Panc1 (cell line): ENCODE measurements at regions of chr5 and their contacts with region 1.

Region 1: DNA sequence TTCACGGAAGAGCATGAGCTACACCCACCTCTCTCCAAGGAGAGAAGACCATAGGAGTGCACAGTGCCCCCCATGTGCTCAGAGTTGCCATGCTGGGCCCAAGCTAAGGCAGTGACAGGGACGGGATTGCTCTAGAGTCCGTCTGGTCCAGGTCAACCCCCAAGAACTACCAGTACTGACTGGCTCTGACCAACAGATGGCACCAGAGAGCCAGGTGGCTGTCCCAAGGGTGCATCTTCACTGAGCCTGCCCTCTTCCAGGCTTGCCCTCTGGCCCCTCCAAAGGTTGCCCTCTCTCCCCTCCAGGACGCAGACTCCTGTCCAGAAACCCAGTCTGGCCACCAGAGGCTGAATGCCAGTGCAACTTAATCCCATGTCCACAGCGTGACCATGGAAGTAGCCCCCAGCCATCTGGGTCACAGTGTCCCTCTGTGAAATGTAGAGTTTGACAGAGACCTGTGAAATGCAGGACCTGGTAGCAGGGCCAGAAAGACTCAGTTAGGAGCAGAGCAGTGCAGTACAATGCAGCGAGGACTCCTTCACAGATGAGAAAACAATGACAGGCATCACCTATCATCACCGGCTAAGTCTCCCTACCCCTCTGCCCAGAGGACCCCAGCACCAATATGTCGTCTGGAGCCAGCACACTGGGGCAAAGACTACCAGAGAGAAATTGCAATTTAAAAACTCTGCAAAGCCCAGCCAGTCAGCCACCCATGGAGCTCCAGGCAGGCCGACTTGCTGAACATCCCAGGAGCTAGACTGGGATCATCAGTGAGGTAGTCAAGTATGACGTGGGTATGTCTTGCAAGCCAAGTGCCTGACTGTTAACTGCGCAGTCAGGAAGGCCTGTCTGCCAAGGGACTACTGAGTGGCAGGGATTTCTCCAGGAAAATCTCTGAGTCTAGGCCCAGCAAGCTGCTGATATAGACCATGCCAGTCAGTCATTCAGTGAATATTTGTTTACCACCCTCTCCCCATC is 7.7 kb upstream of the SKP1 start:
- DNase-seq: peak; percentile 70
- ATAC-seq: peak; percentile 94
- H3K4me3 ChIP-seq: no peak overlapping the region
- H3K27ac ChIP-seq: no peak overlapping the region
- H3K4me1 ChIP-seq: no peaks in the 10 kb centered on the region; the same call in 1 of the 2 replicates
- H3K27me3 ChIP-seq: no peaks in the 10 kb centered on the region
- CTCF ChIP-seq: peak; percentile 96

Region 2: GRCh38 chr5:134145779-134146581 is 38.5 kb before region 1 on chr5:
- CTCF ChIA-PET with region 1: no interaction called
- POLR2A ChIA-PET with region 1: interaction called, 14 read pairs
- in situ Hi-C with region 1: no loop called
- intact Hi-C with region 1: no loop called
- DNase-seq: peak; percentile 69
- ATAC-seq: peak; percentile 88
- H3K4me3 ChIP-seq: no peak overlapping the region
- H3K27ac ChIP-seq: no peak overlapping the region
- H3K4me1 ChIP-seq: peaks cover 6% of the 10 kb centered on the region
- H3K27me3 ChIP-seq: no peaks in the 10 kb centered on the region
- CTCF ChIP-seq: peak; percentile 90

Region 3: DNA sequence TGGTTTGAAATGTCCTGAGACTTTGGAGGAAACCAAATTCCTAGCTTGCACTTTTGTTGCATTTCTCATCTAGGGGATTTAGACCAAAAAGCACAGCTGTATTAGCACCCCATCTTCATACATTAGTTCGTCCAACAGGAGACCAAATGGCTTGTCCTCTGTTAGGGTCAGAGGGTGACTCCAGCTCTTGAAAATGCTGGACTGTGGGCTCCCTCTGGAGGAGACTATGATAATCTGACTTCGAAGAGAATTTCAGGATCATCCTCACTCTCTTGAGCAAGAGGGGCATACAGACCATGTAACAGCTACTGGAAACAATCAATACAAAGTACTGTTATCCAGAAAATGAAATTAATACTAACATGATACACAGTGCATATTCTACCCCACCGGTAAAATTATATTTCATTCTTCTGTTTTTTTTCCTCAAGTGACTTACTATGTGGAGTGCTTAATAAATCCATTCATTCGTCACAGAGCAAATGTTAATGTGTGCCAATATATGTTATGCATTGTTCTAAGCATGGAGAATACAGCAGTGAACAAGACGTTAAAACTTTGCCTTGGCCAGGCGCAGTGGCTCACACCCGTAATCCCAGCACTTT is 105.2 kb after region 1 on chr5:
- CTCF ChIA-PET with region 1: interaction called, 7 read pairs
- POLR2A ChIA-PET with region 1: no interaction called
- in situ Hi-C with region 1: no loop called
- intact Hi-C with region 1: loop called (anchors 1 kb)
- DNase-seq: peak; percentile 75
- ATAC-seq: peak; percentile 99
- H3K4me3 ChIP-seq: no peak overlapping the region
- H3K27ac ChIP-seq: no peak overlapping the region
- H3K4me1 ChIP-seq: no peaks in the 10 kb centered on the region
- H3K27me3 ChIP-seq: no peaks in the 10 kb centered on the region
- CTCF ChIP-seq: peak; percentile 83

Region 4: DNA sequence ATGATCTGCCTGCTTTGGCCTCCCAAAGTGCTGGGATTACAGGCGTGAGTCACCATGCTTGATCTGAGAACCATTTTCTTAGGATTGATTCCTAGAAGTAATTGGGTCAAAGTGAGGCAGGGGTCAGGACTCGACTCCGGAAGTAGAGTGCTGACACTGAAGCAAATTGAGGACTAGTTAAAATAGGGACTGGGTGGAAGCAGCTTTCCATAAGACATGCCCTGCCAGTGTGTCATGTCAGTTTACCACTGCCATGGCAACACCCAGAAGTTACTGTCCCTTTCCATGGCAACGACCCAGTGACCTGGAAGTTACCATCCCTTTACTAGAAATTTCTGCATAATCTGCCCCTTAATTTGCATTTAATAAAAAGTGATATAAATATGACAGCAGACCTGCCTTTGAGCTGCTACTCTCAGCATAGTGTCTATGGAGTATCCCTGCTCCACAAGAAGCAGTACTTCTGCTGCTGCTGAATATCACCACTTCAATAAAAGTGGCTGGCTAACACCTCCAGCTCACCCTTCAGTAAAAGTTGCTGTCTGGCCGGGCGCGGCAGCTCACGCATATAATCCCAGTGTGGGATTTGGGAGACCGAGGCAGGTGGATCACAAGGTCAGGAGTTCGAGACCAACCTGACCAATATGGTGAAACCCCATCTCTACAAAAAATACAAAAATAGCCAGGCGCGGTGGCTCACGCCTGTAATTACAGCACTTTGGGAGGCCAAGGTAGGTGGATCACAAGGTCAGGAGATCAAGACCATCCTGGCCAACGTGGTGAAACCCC is 293.2 kb after region 1 on chr5:
- CTCF ChIA-PET with region 1: no interaction called
- POLR2A ChIA-PET with region 1: no interaction called
- in situ Hi-C with region 1: no loop called
- intact Hi-C with region 1: no loop called
- DNase-seq: no peak
- ATAC-seq: peak; percentile 71; the same call in 1 of the 2 replicates
- H3K4me3 ChIP-seq: no peak overlapping the region
- H3K27ac ChIP-seq: no peak overlapping the region
- H3K4me1 ChIP-seq: no peaks in the 10 kb centered on the region
- H3K27me3 ChIP-seq: no peaks in the 10 kb centered on the region
- CTCF ChIP-seq: no peak